ENCODE measurements at regions of chr14 and their contacts with region 1.

Region 1: GRCh38 chr14:80987235-80988032 is 32.0 kb downstream of the TSHR start:
- DNase-seq: peak; percentile 55
- H3K4me3 Mint-ChIP-seq: no peak overlapping the region
- H3K27ac Mint-ChIP-seq: no peak overlapping the region
- H3K4me1 Mint-ChIP-seq: peaks cover 10% of the 10 kb centered on the region
- H3K27me3 Mint-ChIP-seq: peaks cover under 1% of the 10 kb centered on the region

Region 2: GRCh38 chr14:80587075-80587724 is 400.2 kb before region 1 on chr14:
- intact Hi-C with region 1: loop called (anchors 2 kb)
- DNase-seq: no peak
- H3K4me3 Mint-ChIP-seq: no peak overlapping the region
- H3K27ac Mint-ChIP-seq: peak overlapping the region; percentile 65
- H3K4me1 Mint-ChIP-seq: peaks cover 10% of the 10 kb centered on the region
- H3K27me3 Mint-ChIP-seq: peaks cover 3% of the 10 kb centered on the region

Region 3: DNA sequence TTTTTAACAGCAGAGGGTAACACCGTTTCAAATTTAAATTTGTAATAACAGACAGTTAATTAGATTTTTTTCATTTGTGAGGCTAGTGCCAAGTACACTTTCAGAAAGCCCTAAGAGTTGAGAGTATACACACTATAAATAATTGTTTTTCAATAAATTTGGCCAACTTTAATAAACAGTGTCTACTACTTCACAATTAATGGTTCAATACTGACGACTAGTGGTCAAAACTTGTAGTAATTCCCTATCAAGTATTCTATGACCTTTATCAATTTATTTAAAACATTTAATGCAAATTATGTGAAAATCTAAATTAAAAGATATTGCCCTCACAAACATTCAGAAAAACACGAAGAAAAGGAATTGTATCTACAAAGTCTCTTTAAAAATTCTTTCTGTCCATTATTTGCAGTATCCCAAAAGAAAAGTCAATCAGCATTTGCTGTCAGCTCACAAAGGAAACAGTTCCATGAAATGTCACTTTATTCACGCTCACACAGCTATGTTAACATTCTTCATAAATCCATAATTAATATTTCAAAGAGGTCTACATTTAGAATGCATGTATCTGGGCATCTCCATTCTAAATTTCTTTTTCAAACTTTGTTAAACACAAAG is 137.1 kb before region 1 on chr14:
- intact Hi-C with region 1: loop called (anchors 2 kb)
- DNase-seq: no peak
- H3K4me3 Mint-ChIP-seq: no peak overlapping the region
- H3K27ac Mint-ChIP-seq: no peak overlapping the region
- H3K4me1 Mint-ChIP-seq: no peaks in the 10 kb centered on the region
- H3K27me3 Mint-ChIP-seq: peaks cover 2% of the 10 kb centered on the region

Region 4: DNA sequence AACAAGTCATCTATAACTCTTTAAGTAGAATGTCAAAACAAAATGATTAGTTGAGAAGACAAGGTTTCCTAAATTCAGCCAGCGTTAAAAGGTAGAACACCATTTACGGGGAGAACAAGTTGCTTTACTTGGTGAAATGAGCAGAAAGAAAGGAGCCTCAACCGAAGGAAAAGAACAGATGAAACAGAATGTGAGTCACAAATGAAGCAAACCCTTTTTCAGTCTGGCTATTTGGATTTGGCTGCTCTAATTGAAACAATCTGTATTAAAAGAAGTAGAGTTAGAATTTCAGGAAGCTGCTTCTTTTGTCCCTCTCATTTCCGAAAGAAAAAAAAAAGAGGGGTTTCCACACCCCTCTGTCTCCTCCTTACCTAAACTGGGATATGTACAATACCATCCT is 80.5 kb before region 1 on chr14:
- intact Hi-C with region 1: no loop called
- DNase-seq: no peak
- H3K4me3 Mint-ChIP-seq: no peak overlapping the region
- H3K27ac Mint-ChIP-seq: no peak overlapping the region
- H3K4me1 Mint-ChIP-seq: peaks cover 12% of the 10 kb centered on the region
- H3K27me3 Mint-ChIP-seq: no peaks in the 10 kb centered on the region

Region 5: GRCh38 chr14:80930836-80931389 is 56.5 kb before region 1 on chr14:
- intact Hi-C with region 1: loop called (anchors 2 kb)
- DNase-seq: peak; percentile 55
- H3K4me3 Mint-ChIP-seq: peak overlapping the region; percentile 27
- H3K27ac Mint-ChIP-seq: peak overlapping the region; percentile 64
- H3K4me1 Mint-ChIP-seq: peaks cover 58% of the 10 kb centered on the region
- H3K27me3 Mint-ChIP-seq: no peaks in the 10 kb centered on the region

Region 6: DNA sequence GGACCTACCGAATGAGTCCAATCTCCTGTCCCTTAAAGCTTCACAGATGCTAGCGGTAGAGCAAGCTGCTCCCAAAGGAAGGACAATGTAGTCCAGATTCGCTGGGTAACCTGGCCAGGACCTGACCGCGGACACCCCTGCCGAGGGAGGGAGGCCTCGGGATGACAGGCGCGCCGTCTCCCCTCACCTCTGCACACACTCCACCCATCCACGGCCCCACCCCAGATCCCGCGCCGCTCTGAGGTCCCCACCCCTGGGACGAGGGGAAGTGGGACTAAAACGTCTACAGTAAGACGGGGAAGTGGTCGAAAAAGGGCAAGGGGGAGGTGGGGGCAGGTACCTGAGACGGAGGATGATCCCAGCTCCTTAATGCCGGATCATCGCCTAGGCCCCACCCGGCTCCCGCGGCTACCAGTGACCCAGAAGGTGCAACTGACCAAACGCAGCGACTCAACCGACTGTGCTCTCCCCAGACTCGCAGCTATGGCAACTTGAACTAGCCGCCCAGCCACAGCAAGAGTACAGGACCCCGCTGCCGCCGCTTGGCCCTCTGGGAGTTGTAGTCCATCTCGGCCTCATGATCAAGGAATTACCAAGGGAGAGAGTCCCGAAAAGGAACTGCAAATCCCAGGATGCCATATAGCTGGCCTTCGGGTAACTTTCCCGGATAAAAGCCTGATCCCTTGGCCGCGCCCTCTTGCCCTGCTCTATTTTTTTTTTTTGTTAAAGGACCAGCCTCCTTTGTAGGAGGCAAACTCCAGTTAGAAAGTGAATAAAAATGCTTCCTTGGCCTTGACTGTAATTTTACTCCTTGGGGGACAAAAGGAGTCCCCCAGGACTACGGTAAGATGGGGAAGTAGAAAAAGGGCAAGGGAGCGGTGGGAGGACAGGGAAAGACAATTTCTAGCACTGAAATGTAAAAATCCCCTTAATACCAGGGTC is 45.9 kb before region 1 on chr14 and contains the start of gene CEP128:
- intact Hi-C with region 1: loop called (anchors 1 kb)
- DNase-seq: peak; percentile 79
- H3K4me3 Mint-ChIP-seq: peak within 1 kb of the TSS; percentile 88
- H3K27ac Mint-ChIP-seq: peak within 1 kb of the TSS; percentile 88
- H3K4me1 Mint-ChIP-seq: peaks cover 30% of the 10 kb centered on the region
- H3K27me3 Mint-ChIP-seq: no peaks in the 10 kb centered on the region
- total RNA-seq, gene CEP128: 18.2 and 22.0 TPM in 2 replicates

Region 7: DNA sequence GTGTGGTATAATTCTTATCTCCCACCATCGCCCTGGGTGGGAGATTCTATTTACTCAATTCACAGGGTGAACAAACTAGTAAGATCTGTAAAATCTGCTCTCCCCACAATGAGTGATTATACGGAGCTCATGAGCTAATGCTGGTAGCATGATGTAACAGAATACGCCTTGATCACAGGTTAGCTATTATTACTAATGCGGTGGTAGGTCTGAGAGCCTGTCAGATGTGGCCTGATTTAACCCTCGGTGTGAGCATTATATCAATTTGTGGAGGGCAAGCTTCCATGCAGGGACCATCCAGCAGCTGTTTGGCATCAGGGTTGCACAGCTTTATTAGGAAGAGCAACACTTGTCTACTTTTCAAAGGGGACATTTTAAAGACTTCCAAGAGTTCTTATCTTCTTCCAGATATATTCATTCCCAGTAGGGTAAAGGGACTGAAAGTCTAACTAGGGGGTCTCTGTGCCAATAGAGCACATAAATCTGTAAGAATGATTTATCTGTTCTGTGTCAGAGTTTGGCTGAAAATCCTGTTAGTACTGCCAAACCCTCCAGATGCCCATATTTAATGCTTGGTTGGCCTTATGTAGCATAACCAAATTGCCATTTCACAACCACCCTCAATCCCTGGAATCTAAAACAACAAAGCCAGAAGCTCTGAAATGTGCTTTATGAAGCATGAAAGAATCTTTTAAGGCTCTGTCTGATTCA is 13.3 kb before region 1 on chr14:
- intact Hi-C with region 1: loop called (anchors 1 kb)
- DNase-seq: no peak
- H3K4me3 Mint-ChIP-seq: no peak overlapping the region
- H3K27ac Mint-ChIP-seq: no peak overlapping the region
- H3K4me1 Mint-ChIP-seq: peaks cover 45% of the 10 kb centered on the region
- H3K27me3 Mint-ChIP-seq: peaks cover 12% of the 10 kb centered on the region

Region 8: DNA sequence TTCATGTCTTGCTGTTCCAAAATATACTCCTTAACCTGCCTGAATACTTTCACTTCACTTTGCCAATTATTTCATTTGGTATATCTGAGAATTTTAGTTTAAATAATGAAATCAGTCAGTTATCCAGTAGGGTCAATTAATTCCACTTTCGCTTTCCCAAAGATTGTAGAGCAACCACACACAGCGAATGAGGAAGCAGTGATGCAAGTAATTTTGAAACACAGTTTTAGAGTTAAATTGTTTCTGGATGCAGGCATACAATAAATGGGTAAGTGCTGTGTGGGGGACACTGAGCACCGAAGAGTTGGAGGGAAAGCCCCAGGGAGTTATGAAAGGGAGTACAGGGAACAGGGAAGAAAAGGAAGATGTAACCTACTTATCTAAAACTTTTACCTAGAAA is 30.8 kb after region 1 on chr14:
- intact Hi-C with region 1: no loop called
- DNase-seq: no peak
- H3K4me3 Mint-ChIP-seq: no peak overlapping the region
- H3K27ac Mint-ChIP-seq: no peak overlapping the region
- H3K4me1 Mint-ChIP-seq: no peaks in the 10 kb centered on the region
- H3K27me3 Mint-ChIP-seq: peaks cover 5% of the 10 kb centered on the region

Region 9: DNA sequence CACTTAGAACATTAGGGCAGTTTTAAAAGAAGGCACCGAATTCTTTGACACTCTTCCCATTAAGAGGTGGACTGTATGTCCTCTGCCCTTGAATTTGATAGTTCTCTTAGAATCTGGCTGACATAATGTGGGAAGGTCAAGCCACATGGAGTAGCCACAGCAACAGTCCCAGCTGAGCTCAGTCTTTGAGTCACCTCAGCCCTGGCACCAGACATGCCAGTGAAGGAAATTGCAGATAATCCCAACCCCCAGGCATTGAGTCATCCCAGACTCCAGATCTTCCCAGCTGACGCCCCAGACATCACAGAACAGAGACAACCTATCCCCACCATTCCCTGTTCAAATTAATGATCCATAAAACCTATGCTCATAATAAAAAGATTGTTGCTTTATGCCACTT is 149.9 kb after region 1 on chr14:
- intact Hi-C with region 1: no loop called
- DNase-seq: no peak
- H3K4me3 Mint-ChIP-seq: no peak overlapping the region
- H3K27ac Mint-ChIP-seq: no peak overlapping the region
- H3K4me1 Mint-ChIP-seq: no peaks in the 10 kb centered on the region
- H3K27me3 Mint-ChIP-seq: no peaks in the 10 kb centered on the region

Region 10: GRCh38 chr14:81200054-81200453 is 212.6 kb after region 1 on chr14:
- intact Hi-C with region 1: no loop called
- DNase-seq: no peak
- H3K4me3 Mint-ChIP-seq: no peak overlapping the region
- H3K27ac Mint-ChIP-seq: no peak overlapping the region
- H3K4me1 Mint-ChIP-seq: peaks cover 19% of the 10 kb centered on the region
- H3K27me3 Mint-ChIP-seq: no peaks in the 10 kb centered on the region

Region 11: GRCh38 chr14:81464247-81465002 is 477.0 kb after region 1 on chr14:
- intact Hi-C with region 1: loop called (anchors 2 kb)
- DNase-seq: peak; percentile 57
- H3K4me3 Mint-ChIP-seq: peak overlapping the region; percentile 77
- H3K27ac Mint-ChIP-seq: peak overlapping the region; percentile 63
- H3K4me1 Mint-ChIP-seq: peaks cover 12% of the 10 kb centered on the region
- H3K27me3 Mint-ChIP-seq: no peaks in the 10 kb centered on the region